ENCODE measurements at regions of chr16 and their contacts with region 1.

Region 1: GRCh38 chr16:55711959-55712876 is 56.4 kb downstream of the SLC6A2 start:
- DNase-seq: peak; percentile 59
- CTCF ChIP-seq: peak; percentile 72

Region 2: DNA sequence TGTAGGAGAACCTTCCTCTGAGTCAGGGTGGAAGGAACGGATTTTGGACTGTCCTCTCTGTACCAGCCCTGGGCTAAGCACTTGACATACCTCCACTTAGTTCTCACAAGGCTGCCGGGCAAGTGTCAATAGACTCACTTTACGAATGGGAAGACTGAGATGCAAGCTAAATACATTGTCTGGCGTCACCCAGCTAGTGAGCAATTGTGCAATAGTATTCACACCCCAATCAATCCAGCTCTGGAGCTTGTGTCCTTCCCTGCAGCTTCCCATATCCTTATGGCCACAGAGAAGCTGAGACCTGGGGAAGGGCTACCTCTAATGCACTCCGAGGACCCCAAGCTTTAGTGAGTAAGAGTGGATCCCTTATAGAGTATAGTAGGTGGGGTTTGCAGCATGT is 16.6 kb before region 1 on chr16:
- CTCF ChIA-PET with region 1: no interaction called
- POLR2A ChIA-PET with region 1: no interaction called
- DNase-seq: no peak
- CTCF ChIP-seq: no peak

Region 3: GRCh38 chr16:55809386-55809785 is 97.2 kb after region 1 on chr16:
- CTCF ChIA-PET with region 1: no interaction called
- POLR2A ChIA-PET with region 1: no interaction called
- DNase-seq: no peak
- CTCF ChIP-seq: no peak

Region 4: GRCh38 chr16:55842369-55843104 is 130.3 kb after region 1 on chr16:
- CTCF ChIA-PET with region 1: interaction called, 41 read pairs
- POLR2A ChIA-PET with region 1: no interaction called
- DNase-seq: peak; percentile 65
- CTCF ChIP-seq: peak; percentile 58